ENCODE measurements at regions of chr11 and their contacts with region 1.

Region 1: DNA sequence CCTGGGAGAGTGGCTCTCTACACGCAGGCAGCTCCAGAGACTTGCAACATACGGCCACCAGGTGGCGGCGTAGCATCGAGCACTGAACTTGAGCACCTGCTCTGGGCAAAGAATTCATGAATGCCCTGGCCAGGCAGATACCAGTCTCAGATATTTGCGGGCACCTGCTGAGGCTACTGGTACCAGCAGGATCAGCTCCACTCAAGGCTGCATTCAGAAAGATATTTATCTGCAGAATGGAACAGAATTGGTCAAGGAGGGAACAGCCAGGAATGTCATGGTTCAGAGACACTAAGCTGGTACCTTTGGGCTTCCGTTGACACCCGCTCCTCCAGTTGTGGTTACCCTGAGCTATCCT is 10.8 kb upstream of the CCDC86 start:
- DNase-seq: peak; percentile 71 to 90 (median 85)
- H3K4me3 ChIP-seq: no peak overlapping the region
- H3K27ac ChIP-seq: no peak overlapping the region
- H3K4me1 ChIP-seq: peaks cover 2% of the 10 kb centered on the region
- H3K27me3 ChIP-seq: no peaks in the 10 kb centered on the region
- CTCF ChIP-seq: peak; percentile 83 to 90 (median 90)
- EP300 ChIP-seq: no peak
- POLR2A ChIP-seq: no peak

Region 2: GRCh38 chr11:60891103-60891741 is 60.1 kb after region 1 on chr11:
- intact Hi-C with region 1: loop called in 2 of 4 experiments (anchors 5 kb)
- DNase-seq: peak; percentile 69 to 86 (median 77)
- H3K4me3 ChIP-seq: no peak overlapping the region
- H3K27ac ChIP-seq: no peak overlapping the region
- H3K4me1 ChIP-seq: peaks cover 3% of the 10 kb centered on the region
- H3K27me3 ChIP-seq: no peaks in the 10 kb centered on the region
- CTCF ChIP-seq: no peak
- EP300 ChIP-seq: no peak
- POLR2A ChIP-seq: no peak

Region 3: DNA sequence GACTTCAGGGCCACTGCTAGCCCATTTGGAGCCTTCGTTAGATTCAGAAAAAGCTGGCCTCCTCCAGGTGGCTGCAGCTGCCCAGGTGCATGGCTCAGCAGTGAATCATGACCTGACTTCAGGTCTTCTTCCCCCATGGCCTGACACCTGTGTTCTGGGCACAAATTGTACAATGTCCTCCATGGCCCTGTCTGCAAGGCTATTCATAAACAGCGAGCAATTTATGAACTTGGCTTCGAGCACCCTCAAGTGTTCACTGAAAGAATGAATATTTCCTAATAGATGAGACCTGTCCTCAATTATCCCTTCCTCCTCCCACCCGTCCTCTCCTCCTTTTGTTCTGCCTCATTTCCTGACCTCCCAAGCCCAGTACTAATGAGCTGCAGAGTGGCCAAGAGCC is 342.3 kb after region 1 on chr11:
- intact Hi-C with region 1: loop called in 1 of 4 experiments (anchors 10 kb)
- DNase-seq: no peak
- H3K4me3 ChIP-seq: no peak overlapping the region
- H3K27ac ChIP-seq: no peak overlapping the region
- H3K4me1 ChIP-seq: no peaks in the 10 kb centered on the region
- H3K27me3 ChIP-seq: no peaks in the 10 kb centered on the region
- CTCF ChIP-seq: peak in 2 of 3 donors; percentile 11 to 12
- EP300 ChIP-seq: no peak
- POLR2A ChIP-seq: no peak

Region 4: DNA sequence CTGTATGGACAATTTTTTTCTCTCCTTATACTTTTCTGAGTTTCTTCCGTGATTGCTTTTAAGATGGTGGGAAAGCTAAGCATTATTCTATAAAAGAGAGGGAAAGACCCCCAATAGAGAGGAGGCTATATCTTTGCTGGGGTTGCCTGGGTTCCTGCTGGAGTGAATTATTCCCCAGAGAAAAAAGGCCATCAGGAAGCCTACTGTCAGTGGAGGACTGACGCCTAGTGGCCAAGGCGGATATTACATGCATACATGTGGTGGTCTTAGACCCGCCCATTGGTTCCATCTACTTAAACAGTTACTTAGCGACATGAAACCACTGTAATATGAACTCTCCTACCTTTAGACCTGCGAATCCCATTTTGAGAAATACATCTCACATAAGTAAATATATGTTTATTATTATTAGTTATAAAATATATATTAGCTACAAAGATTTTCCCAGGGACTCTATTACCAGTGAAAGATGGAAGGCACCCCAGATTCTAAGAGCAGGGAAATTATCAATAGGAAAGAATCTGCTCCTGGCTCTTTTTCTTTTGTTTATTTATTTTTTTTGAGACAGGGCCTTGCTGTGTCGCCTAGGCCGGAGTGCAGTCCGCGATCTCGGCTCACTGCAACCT is 356.5 kb after region 1 on chr11:
- intact Hi-C with region 1: loop called in 2 of 4 experiments (anchors 2 to 5 kb)
- DNase-seq: peak; percentile 61 to 78 (median 78)
- H3K4me3 ChIP-seq: no peak overlapping the region
- H3K27ac ChIP-seq: no peak overlapping the region
- H3K4me1 ChIP-seq: no peaks in the 10 kb centered on the region
- H3K27me3 ChIP-seq: no peaks in the 10 kb centered on the region
- CTCF ChIP-seq: peak; percentile 71 to 80 (median 77)
- EP300 ChIP-seq: no peak
- POLR2A ChIP-seq: no peak